OCI-LY7 (cell line): ENCODE measurements at regions of chr18 and their contacts with region 1.

Region 1: GRCh38 chr18:32930695-32931301 is 158.0 kb upstream of the KLHL14 start:
- DNase-seq: peak; percentile 71
- H3K4me3 ChIP-seq: no peak overlapping the region
- H3K27ac ChIP-seq: no peak overlapping the region
- H3K4me1 ChIP-seq: no peaks in the 10 kb centered on the region
- CTCF ChIP-seq: peak; percentile 74

Region 2: GRCh38 chr18:32576296-32576916 is 354.4 kb before region 1 on chr18:
- CTCF ChIA-PET with region 1: no interaction called
- POLR2A ChIA-PET with region 1: no interaction called
- intact Hi-C with region 1: loop called (anchors 10 kb)
- DNase-seq: peak; percentile 11
- H3K4me3 ChIP-seq: no peak overlapping the region
- H3K27ac ChIP-seq: no peak overlapping the region
- H3K4me1 ChIP-seq: no peaks in the 10 kb centered on the region
- CTCF ChIP-seq: peak; percentile 51; the same call in 1 of the 2 replicates